ENCODE measurements at regions of chr4 and their contacts with region 1.

Region 1: DNA sequence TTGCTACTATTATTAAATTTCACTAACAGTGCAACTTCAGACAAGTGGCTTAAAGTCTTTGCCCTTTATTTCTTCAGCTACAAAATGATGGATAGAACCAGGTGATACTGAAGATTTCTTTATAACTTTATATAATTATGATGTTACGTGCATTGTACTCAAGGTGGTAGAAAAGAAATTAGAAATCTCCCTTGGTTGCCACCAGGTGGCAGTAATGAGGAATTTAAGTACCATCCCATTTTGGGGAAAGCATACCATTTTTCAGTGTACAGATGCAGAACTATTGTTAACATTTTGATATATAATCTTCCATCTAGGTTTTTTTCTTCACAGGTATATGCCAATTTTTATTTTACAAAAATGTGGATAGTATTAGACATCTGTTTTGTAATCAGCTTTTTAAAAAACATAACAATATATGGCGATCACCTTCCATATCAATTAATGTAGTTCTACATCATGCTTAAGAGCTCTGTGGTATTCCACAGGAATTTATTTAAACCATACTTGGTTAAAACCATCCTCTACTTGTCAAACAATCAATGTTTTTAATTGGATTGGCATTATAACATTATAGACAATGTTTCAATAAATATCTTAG is 37.7 kb upstream of the RAB33B start:
- DNase-seq: no peak
- ATAC-seq: peak in 2 of 4 donors; percentile 36 to 41
- H3K4me3 ChIP-seq: no peak overlapping the region
- H3K27ac ChIP-seq: no peak overlapping the region
- H3K4me1 ChIP-seq: no peaks in the 10 kb centered on the region
- H3K27me3 ChIP-seq: no peaks in the 10 kb centered on the region
- CTCF ChIP-seq: peak; percentile 74

Region 2: GRCh38 chr4:139509727-139510410 is 93.7 kb after region 1 on chr4:
- intact Hi-C with region 1: loop called in 1 of 2 experiments (anchors 5 kb)
- DNase-seq: no peak
- ATAC-seq: peak; percentile 54 to 69 (median 64)
- H3K4me3 ChIP-seq: no peak overlapping the region
- H3K27ac ChIP-seq: peak overlapping the region; percentile 48
- H3K4me1 ChIP-seq: peaks cover 48% of the 10 kb centered on the region
- H3K27me3 ChIP-seq: no peaks in the 10 kb centered on the region
- CTCF ChIP-seq: peak; percentile 47

Region 3: GRCh38 chr4:139554893-139555704 is 138.9 kb after region 1 on chr4:
- intact Hi-C with region 1: loop called in 1 of 2 experiments (anchors 5 kb)
- DNase-seq: peak; percentile 88 to 96
- ATAC-seq: peak; percentile 74 to 79 (median 78)
- H3K4me3 ChIP-seq: peak overlapping the region; percentile 96
- H3K27ac ChIP-seq: peak overlapping the region; percentile 99
- H3K4me1 ChIP-seq: peaks cover 42% of the 10 kb centered on the region
- H3K27me3 ChIP-seq: no peaks in the 10 kb centered on the region
- CTCF ChIP-seq: no peak

Region 4: GRCh38 chr4:139603576-139604387 is 187.6 kb after region 1 on chr4:
- intact Hi-C with region 1: no loop called
- DNase-seq: no peak
- ATAC-seq: peak; percentile 43 to 66 (median 62)
- H3K4me3 ChIP-seq: no peak overlapping the region
- H3K27ac ChIP-seq: no peak overlapping the region
- H3K4me1 ChIP-seq: no peaks in the 10 kb centered on the region
- H3K27me3 ChIP-seq: no peaks in the 10 kb centered on the region
- CTCF ChIP-seq: peak; percentile 68

Region 5: DNA sequence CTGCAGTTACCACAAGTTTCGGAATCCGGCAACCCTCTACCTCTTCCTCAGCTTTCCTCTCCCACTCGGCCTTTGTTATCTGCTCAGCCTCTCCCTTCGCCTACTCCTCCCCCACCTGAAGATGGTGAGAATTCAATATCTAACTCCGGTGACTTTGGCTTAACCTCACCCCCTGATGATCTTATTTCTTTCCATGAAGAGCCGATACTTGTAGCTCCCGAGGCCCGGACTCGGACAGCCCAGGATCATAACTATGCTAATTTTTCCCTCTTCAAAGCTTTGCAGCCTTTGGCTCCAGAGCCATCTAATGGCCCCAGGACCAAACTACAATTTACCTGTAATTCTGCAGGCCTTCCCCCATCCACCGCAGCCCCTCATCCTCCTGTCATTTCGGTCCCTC is 217.5 kb after region 1 on chr4:
- intact Hi-C with region 1: loop called in 1 of 2 experiments (anchors 10 kb)
- DNase-seq: peak in 1 of 2 donors; percentile 22
- ATAC-seq: peak; percentile 67 to 87 (median 81)
- H3K4me3 ChIP-seq: peak overlapping the region; percentile 25
- H3K27ac ChIP-seq: no peak overlapping the region
- H3K4me1 ChIP-seq: no peaks in the 10 kb centered on the region
- H3K27me3 ChIP-seq: no peaks in the 10 kb centered on the region
- CTCF ChIP-seq: peak; percentile 51

Measured in psoas muscle (tissue), 8 donors.